ENCODE measurements at regions of chr3 and their contacts with region 1.

Region 1: DNA sequence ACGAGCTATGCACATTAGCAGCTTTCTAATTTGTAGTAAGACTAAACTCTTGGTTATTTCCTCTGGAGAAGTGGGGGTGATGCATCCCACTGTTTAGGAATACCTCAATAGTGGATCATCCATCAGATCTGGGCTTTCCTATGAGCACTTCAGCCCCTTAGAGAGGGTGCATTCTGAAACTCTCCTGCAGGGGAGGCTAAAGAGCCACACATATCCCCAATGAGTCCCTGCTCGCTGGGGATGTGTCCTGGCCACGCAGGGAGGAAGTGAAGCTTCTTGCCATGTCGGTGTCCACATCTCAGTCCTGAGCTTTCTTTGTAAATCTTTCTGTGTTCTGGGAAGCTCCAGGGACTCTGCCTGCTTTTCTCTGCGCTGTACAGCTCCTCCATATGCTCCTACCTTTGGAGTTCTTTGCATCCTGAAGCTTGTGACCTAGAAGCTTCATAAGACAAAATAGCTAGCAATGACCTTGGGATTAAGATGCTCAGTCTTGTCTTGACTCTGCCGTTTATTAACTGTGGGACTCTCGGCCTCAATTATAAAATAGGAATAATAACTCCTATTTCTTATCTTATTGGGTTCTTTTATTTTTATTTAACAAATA is 28.3 kb upstream of the MASP1 start:
- DNase-seq: peak; percentile 73
- ATAC-seq: peak; percentile 92
- H3K4me3 ChIP-seq: no peak overlapping the region
- H3K27ac ChIP-seq: peak overlapping the region; percentile 83
- H3K4me1 ChIP-seq: peaks cover 15% of the 10 kb centered on the region
- H3K27me3 ChIP-seq: peaks cover 7% of the 10 kb centered on the region; the same call in 1 of the 2 replicates
- CTCF ChIP-seq: peak; percentile 97

Region 2: DNA sequence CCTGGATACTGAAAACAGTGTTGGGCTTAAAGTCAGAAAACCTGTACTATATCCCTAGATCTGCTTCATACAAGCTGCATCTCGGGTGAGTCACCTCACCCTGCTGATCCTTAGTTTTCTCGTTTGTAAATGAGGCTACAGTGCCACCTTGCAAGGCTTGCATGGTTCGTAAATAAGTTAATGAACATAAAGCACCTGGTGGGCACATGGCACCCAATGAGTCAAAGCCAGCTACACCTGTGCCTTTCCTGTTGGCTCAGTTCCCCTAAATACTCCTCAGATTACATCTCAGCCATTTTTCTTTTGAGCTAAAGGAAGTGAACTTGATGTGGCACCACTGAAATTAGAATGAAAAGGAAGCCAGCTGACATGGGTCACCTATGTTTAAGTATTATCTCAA is 96.0 kb before region 1 on chr3:
- CTCF ChIA-PET with region 1: interaction called, 19 read pairs
- POLR2A ChIA-PET with region 1: interaction called, 5 read pairs
- in situ Hi-C with region 1: no loop called
- intact Hi-C with region 1: loop called (anchors 1 kb)
- DNase-seq: no peak
- ATAC-seq: no peak
- H3K4me3 ChIP-seq: no peak overlapping the region
- H3K27ac ChIP-seq: no peak overlapping the region
- H3K4me1 ChIP-seq: no peaks in the 10 kb centered on the region
- H3K27me3 ChIP-seq: no peaks in the 10 kb centered on the region
- CTCF ChIP-seq: no peak

Region 3: GRCh38 chr3:187368251-187369088 is 48.7 kb after region 1 on chr3 and contains the start of gene RTP4:
- CTCF ChIA-PET with region 1: no interaction called
- POLR2A ChIA-PET with region 1: no interaction called
- in situ Hi-C with region 1: no loop called
- intact Hi-C with region 1: no loop called
- DNase-seq: peak; percentile 10
- ATAC-seq: peak; percentile 80
- H3K4me3 ChIP-seq: peak within 1 kb of the TSS; percentile 24 to 58
- H3K27ac ChIP-seq: peak within 1 kb of the TSS; percentile 94
- H3K4me1 ChIP-seq: peaks cover 7% of the 10 kb centered on the region
- H3K27me3 ChIP-seq: no peaks in the 10 kb centered on the region
- CTCF ChIP-seq: no peak
- total RNA-seq, gene RTP4: 2.5 TPM

Region 4: GRCh38 chr3:187567661-187568121 is 247.9 kb after region 1 on chr3:
- CTCF ChIA-PET with region 1: no interaction called
- POLR2A ChIA-PET with region 1: no interaction called
- in situ Hi-C with region 1: no loop called
- intact Hi-C with region 1: loop called (anchors 10 kb)
- DNase-seq: no peak
- ATAC-seq: no peak
- H3K4me3 ChIP-seq: no peak overlapping the region
- H3K27ac ChIP-seq: no peak overlapping the region
- H3K4me1 ChIP-seq: no peaks in the 10 kb centered on the region
- H3K27me3 ChIP-seq: no peaks in the 10 kb centered on the region
- CTCF ChIP-seq: no peak

Region 5: DNA sequence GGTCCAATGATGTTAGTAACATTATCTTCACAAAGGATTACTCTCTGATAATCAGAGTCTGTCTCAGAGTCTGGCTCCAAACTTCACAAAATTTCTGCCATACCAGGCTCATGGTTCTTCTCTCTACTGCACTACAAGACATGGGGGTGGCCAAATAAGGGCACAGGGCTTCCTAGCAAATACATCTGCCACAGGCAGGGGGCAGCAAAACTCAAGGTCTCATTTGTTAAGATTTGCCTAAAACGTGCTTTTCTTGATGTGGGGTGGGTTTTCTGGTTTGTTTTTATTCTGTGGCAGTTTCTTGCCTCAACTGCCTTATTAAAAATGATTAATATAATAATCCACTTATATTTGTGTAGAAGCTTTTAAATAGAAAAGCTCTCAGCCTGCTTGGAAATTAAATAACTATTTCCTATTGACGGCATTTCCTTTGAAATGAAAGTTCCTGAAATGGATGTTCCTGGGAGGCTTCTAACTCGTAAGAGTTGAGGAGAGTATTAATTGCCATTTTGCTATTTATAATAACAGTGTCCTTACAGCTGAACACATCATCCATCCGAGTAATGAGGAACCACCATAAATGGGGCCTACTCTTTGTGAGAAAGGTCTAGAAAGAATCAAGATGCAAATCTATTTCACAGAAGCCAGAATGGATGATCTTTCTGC is 296.6 kb after region 1 on chr3:
- CTCF ChIA-PET with region 1: interaction called, 10 read pairs
- POLR2A ChIA-PET with region 1: no interaction called
- in situ Hi-C with region 1: no loop called
- intact Hi-C with region 1: loop called (anchors 5 kb)
- DNase-seq: peak; percentile 18
- ATAC-seq: peak; percentile 79; the same call in 1 of the 2 replicates
- H3K4me3 ChIP-seq: no peak overlapping the region
- H3K27ac ChIP-seq: 0 out of 2 replicates have a peak overlapping the region, but pooled peaks have one; percentile 20
- H3K4me1 ChIP-seq: no peaks in the 10 kb centered on the region
- H3K27me3 ChIP-seq: no peaks in the 10 kb centered on the region
- CTCF ChIP-seq: peak; percentile 87

Measured in Panc1 (cell line).